Adrenal gland (tissue), 19 donors: ENCODE measurements at regions of chr3 and their contacts with region 1.

Region 1: DNA sequence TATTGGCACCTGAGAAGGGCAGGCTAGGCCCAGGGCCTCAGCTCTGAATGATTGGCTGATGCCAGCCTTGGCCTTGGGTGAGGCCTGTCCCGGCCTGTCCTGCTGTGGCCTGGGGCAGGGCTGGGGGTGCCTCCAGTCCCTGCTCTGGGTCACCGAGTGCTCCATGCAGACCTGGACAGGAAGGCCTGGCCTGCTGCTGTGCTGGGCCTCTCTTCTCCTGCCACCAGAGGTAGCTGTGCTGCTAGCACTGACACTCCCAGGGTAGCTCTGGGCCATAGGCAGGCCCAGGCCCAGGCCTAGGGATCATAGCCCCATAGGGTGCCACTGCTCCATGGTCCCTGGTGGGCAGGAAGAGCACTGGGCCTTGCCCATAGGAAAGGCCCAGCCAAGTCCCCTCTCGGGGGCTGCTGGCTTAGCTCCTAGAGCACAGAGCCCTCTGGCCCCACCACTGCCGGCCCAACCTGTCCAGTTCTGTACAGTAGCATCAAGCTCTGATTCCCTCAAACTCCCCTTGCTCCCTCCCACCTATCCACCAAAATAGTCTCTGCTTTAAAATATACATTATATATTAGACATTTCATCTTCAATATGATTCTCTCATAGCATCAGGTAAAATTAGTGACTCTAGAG is 18.2 kb downstream of the ABTB1 start:
- DNase-seq: peak in 6 of 7 donors; percentile 57 to 76 (median 68)
- H3K4me3 ChIP-seq: no peak overlapping the region
- H3K27ac ChIP-seq: peak overlapping the region in 1 of 5 donors; percentile 62
- H3K4me1 ChIP-seq: peaks cover 0 to under 1% of the 10 kb centered on the region in 2 donors
- H3K27me3 ChIP-seq: no peaks in the 10 kb centered on the region
- CTCF ChIP-seq: peak; percentile 31 to 70 (median 58)
- POLR2A ChIP-seq: no peak

Region 2: DNA sequence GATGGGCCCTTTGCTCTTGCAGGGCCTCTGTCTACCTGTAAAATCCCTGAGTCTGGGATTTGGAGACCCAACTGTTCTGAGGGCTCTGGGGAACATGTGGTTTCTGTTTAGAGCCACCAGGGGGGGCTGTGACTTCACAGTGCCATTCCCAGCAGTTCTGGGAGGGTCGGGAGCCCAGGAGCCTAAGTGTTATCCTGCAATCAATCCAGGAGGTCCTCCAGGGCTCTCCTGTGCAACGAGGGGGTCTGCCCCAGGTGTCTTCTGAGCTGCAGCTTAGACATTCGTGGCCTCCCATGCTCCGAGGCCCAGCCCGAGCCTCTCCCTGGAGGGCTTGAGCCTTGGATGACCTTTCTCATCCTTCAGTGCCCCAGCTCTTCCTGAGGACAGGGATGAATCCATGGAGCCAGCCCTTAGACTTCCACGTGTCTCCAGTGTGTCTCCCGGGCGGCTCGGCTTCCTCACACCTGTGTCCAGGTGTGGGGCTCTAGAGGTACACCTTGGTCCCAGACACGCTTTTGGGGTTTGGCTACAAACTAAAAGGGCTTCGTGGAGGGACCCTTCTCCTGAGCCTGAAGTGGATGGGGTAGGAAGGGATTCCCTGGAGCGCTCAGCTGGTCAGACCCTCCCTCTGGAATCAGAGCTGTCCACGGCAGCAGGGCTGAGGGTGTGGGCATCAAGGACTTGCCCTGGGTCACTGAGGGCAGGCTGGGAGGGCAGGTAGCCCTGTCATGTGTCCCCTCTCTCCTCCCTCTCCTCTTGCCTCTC is 38.5 kb before region 1 on chr3:
- intact Hi-C with region 1: loop called in 1 of 2 experiments (anchors 5 kb)
- DNase-seq: peak; percentile 44 to 77 (median 50)
- H3K4me3 ChIP-seq: no peak overlapping the region
- H3K27ac ChIP-seq: no peak overlapping the region
- H3K4me1 ChIP-seq: peaks cover 0 to 17% of the 10 kb centered on the region in 2 donors
- H3K27me3 ChIP-seq: no peaks in the 10 kb centered on the region
- CTCF ChIP-seq: peak; percentile 72 to 89 (median 83)
- POLR2A ChIP-seq: no peak

Region 3: DNA sequence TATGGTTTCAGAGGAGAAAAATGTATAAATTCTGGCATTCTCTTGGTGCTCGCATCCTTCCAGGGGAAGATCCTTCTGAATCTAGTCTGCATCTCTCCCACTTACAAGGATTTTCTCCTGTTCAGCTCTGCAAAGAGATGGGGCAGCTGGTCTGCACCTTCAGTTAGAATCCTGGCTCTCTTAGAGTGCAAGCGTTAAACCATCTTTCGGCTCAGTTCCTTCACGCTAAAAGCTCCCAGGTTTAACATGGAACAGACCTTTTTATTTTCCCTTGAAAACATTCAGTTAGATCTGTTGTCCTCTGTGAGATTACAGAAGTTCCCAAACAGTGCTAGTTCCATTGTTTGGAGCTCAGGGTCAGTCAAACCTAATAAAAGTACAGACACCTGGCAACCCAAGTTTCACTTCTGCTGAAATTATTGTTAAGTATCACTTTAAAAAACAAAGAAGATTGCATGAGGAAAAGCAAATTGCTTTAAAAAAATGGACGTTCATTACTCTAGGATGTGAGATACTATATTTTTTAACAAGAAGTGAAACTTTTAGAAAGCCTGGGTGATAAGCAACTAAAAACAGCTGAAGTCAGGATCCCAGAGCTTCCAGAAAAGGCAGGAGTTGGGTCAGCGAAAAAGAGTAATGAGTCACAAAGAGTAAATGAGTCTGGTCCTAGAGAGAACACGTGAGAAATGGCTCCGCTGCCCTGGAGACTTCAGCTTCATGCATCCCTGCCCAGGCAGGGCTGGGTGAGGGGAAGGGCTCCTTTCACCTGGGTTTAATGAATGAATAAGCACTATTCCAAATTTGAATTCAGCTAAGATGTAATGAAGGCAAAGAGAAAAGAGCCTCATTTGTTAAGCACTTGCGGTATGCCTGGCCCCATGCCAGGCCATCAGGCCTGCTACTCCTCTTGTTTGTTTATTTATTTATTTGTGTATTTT is 45.1 kb after region 1 on chr3:
- intact Hi-C with region 1: no loop called
- DNase-seq: peak in 6 of 7 donors; percentile 46 to 67 (median 62)
- H3K4me3 ChIP-seq: no peak overlapping the region
- H3K27ac ChIP-seq: peak overlapping the region in 4 of 5 donors; percentile 46 to 84 (median 64)
- H3K4me1 ChIP-seq: peaks cover 10 to 65% of the 10 kb centered on the region in 2 donors
- H3K27me3 ChIP-seq: no peaks in the 10 kb centered on the region
- CTCF ChIP-seq: no peak
- POLR2A ChIP-seq: no peak

Region 4: GRCh38 chr3:127817396-127817841 is 126.5 kb after region 1 on chr3:
- intact Hi-C with region 1: loop called (anchors 10 kb)
- DNase-seq: no peak
- H3K4me3 ChIP-seq: no peak overlapping the region
- H3K27ac ChIP-seq: no peak overlapping the region
- H3K4me1 ChIP-seq: peaks cover 7 to 13% of the 10 kb centered on the region in 2 donors
- H3K27me3 ChIP-seq: no peaks in the 10 kb centered on the region
- CTCF ChIP-seq: no peak
- POLR2A ChIP-seq: no peak

Region 5: DNA sequence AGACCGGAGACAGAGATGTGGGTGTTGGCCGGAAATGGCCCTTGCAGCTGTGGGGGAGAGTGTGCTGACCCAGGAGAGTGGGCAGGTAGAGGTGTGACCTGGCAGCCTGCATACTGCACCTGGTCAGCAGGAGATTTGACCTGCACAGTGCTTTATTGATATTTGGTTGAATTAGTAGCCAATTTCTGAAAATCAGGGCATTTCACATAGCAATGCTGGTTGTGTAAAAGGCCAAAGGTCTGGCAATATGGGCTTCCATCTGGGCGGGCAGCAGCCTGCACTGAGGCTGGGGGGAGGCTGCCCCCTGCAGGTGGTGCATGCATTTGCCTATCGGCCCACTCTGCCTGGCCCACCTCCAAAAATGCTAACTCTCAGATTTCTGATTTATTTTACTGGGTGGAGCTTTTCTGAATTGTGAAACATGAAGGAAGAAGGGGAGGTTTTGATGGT is 140.8 kb after region 1 on chr3:
- intact Hi-C with region 1: loop called (anchors 5 to 10 kb)
- DNase-seq: peak in 6 of 7 donors; percentile 41 to 73 (median 64)
- H3K4me3 ChIP-seq: no peak overlapping the region
- H3K27ac ChIP-seq: no peak overlapping the region
- H3K4me1 ChIP-seq: no peaks in the 10 kb centered on the region
- H3K27me3 ChIP-seq: no peaks in the 10 kb centered on the region
- CTCF ChIP-seq: peak; percentile 30 to 73 (median 60)
- POLR2A ChIP-seq: no peak

Region 6: DNA sequence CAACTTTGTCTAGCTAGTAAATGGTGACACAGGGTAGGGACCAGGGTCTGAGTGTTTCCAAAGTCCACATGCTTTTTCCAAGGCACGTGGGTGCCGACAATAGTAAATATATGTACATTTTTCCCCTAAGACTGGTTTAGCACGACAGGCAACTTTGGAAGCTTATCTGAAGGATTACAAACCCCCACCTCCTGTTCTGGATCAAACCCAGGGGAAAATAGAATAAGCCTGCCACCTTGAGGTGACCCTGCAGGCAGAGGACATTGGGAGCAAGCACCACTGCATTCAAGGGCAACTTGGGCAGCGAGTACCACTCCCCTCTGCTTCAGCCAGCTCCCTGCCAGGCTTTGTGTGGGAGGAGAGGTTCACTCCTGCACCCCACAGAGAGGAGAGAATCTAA is 268.9 kb after region 1 on chr3:
- intact Hi-C with region 1: loop called in 1 of 2 experiments (anchors 5 kb)
- DNase-seq: peak in 6 of 7 donors; percentile 21 to 45 (median 29)
- H3K4me3 ChIP-seq: no peak overlapping the region
- H3K27ac ChIP-seq: no peak overlapping the region
- H3K4me1 ChIP-seq: no peaks in the 10 kb centered on the region
- H3K27me3 ChIP-seq: no peaks in the 10 kb centered on the region
- CTCF ChIP-seq: peak in 5 of 6 experiments; percentile 36 to 53 (median 43)
- POLR2A ChIP-seq: no peak